WTC11 (cell line): ENCODE measurements at regions of chr3 and their contacts with region 1.

Region 1: GRCh38 chr3:157436583-157437291 is at the start of gene PTX3:
- DNase-seq: peak; percentile 11
- ATAC-seq: peak; percentile 10
- H3K4me3 Mint-ChIP-seq: peak within 1 kb of the TSS; percentile 78
- H3K27ac Mint-ChIP-seq: no peak within 1 kb of the TSS
- H3K4me1 Mint-ChIP-seq: peaks cover 19% of the 10 kb centered on the region
- H3K27me3 Mint-ChIP-seq: peaks cover 34% of the 10 kb centered on the region
- CTCF ChIP-seq: no peak
- total RNA-seq, gene PTX3: 0.59 to 0.76 TPM (median 0.73 TPM) in 3 replicates

Region 2: DNA sequence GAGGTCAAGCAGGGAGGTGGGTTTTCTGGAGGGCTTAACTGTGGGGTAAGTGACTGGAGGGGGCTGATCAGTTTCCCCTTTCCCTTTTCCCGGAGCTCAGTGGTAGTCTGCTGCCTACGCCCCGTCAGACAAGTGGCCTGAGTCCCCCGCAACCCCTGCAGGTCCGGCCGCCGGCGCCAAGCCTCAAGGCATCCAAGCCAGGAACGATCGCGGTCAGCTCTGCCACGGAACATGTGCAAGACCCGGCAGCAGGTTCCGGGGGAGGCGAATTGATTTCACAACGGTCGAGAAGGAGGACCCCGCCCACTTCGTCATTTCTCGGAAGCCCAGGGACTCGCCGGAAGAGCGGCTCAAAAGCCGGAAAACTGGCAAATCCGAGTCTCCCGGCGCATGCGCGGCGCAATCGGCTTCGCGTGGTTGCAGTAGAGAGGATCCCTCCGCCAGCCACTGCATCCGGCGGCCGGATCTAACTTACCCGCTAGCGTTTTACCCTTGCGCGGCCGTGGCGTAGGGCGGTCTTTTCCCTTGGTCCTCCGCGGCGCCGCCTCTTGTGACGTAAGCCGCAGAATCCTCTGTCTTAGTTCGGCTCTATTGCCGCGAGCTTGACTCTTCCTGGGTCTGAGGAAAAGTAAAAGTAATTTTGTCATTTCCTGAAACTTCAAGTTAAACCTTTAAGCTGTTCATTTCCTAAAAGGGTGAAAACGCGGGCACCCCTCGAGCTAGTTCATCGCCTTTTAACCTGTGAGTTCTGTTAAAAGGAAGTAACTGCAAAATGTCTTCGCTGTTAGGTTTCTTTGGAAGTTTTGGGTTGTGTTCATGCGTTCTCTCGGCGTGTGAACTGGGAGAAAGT is 261.9 kb before region 1 on chr3:
- CTCF ChIA-PET with region 1: no interaction called
- POLR2A ChIA-PET with region 1: interaction called, 16 read pairs
- DNase-seq: peak; percentile 96
- ATAC-seq: peak; percentile 91
- H3K4me3 Mint-ChIP-seq: peak overlapping the region; percentile 86
- H3K27ac Mint-ChIP-seq: peak overlapping the region; percentile 99
- H3K4me1 Mint-ChIP-seq: peaks cover 11% of the 10 kb centered on the region
- H3K27me3 Mint-ChIP-seq: no peaks in the 10 kb centered on the region; the same call in 1 of the 2 replicates
- CTCF ChIP-seq: no peak

Region 3: GRCh38 chr3:157347577-157348303 is 89.0 kb before region 1 on chr3:
- CTCF ChIA-PET with region 1: interaction called, 15 read pairs
- POLR2A ChIA-PET with region 1: interaction called, 3 read pairs
- DNase-seq: peak; percentile 89
- ATAC-seq: peak; percentile 100
- H3K4me3 Mint-ChIP-seq: no peak overlapping the region
- H3K27ac Mint-ChIP-seq: no peak overlapping the region
- H3K4me1 Mint-ChIP-seq: peaks cover 6% of the 10 kb centered on the region
- H3K27me3 Mint-ChIP-seq: no peaks in the 10 kb centered on the region
- CTCF ChIP-seq: peak; percentile 96

Region 4: DNA sequence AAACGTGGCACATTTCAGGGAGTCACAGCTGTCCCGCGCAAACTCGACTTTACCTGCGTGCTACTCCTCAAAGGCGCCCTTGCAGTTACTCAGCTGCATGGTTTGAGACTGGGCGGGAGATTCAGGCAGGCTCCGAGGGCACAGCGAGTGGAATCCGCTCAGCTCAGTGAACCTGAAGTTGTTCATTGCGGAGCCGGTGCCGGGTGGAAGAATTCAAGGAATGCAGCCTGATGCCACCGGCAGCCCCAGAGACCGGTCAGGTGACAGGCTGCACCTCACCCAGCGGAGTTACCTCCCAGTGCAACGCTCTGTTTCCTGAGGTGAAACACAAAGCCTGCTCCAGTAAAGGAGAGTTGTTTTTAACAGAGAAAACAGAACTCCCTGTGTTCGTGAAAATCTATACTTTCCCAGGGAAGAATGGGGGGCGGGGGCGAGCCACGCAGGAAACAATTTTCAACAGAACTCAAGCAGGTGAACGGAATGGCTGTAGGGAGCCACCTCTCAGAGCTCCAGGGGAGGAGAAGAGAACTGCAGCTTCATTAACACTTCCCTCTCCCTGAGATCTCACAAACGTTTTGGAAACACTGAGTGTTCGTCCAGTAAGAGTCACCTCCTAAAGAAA is 62.7 kb after region 1 on chr3:
- CTCF ChIA-PET with region 1: interaction called, 11 read pairs
- POLR2A ChIA-PET with region 1: interaction called, 12 read pairs
- DNase-seq: peak; percentile 91
- ATAC-seq: peak; percentile 90
- H3K4me3 Mint-ChIP-seq: peak overlapping the region; percentile 78
- H3K27ac Mint-ChIP-seq: peak overlapping the region; percentile 98
- H3K4me1 Mint-ChIP-seq: peaks cover 64% of the 10 kb centered on the region
- H3K27me3 Mint-ChIP-seq: no peaks in the 10 kb centered on the region; the same call in 1 of the 2 replicates
- CTCF ChIP-seq: no peak